Heart left ventricle (tissue), 16 donors: ENCODE measurements at regions of chr15 and their contacts with region 1.

Region 1: DNA sequence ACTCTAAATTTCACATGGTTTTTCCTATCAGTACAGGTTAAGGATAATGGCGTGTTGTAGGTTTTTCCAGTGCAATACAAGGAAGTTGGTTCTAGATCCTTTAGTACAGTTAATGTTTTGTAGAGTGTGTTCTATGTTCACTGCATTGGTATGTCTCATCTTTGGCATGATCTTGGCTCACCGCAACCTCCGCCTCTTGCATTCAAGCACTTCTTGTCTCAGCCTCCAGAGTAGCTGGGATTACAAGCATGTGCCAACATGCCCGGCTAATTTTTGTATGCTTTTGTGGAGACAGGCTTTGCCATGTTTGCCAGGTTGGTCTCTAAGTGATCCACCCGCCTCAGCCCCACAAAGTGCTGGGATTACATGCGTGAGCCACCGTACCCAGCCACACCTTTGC is 30.4 kb downstream of the SNRPN start:
- DNase-seq: no peak
- ATAC-seq: peak in 3 of 4 donors; percentile 27 to 49 (median 35)
- H3K4me3 ChIP-seq: no peak overlapping the region
- H3K27ac ChIP-seq: no peak overlapping the region
- H3K4me1 ChIP-seq: peaks cover 0 to 5% (median 0%) of the 10 kb centered on the region in 12 donors
- H3K27me3 ChIP-seq: no peaks in the 10 kb centered on the region
- CTCF ChIP-seq: no peak
- POLR2A ChIP-seq: no peak

Region 2: DNA sequence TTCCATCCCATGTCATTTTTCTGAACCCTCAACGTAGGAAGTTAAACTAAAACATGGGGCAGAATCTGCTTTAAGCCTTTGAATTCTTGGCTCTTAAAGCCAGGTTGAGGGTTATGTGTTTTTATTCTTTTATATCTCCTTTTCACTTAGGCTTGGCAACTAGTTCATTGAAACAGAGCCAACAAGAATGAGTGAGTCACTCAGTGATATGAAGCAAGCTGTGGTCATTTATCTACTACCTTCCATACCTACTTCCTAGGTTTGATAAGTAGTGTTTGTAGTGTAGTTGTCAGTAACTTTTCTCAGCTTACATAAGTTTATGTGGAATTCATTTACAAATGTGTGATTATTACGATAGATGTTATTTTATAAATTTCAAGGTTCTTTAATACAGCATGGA is 37.0 kb after region 1 on chr15:
- intact Hi-C with region 1: loop called in 1 of 10 experiments (anchors 5 kb)
- DNase-seq: no peak
- ATAC-seq: peak in 2 of 4 donors; percentile 47 to 56
- H3K4me3 ChIP-seq: no peak overlapping the region
- H3K27ac ChIP-seq: peak overlapping the region in 1 of 12 donors; percentile 0
- H3K4me1 ChIP-seq: peaks cover 0 to 3% (median 0%) of the 10 kb centered on the region in 12 donors
- H3K27me3 ChIP-seq: no peaks in the 10 kb centered on the region
- CTCF ChIP-seq: no peak
- POLR2A ChIP-seq: no peak